ENCODE measurements at regions of chr22 and their contacts with region 1.

Region 1: GRCh38 chr22:31561238-31561887 is 65.0 kb downstream of the SFI1 start:
- DNase-seq: peak; percentile 74
- H3K4me3 ChIP-seq: no peak overlapping the region
- H3K27ac ChIP-seq: no peak overlapping the region
- H3K4me1 ChIP-seq: no peaks in the 10 kb centered on the region
- H3K27me3 ChIP-seq: no peaks in the 10 kb centered on the region
- CTCF ChIP-seq: peak; percentile 73

Region 2: GRCh38 chr22:31623592-31624304 is 62.4 kb after region 1 on chr22:
- CTCF ChIA-PET with region 1: no interaction called
- POLR2A ChIA-PET with region 1: interaction called, 10 read pairs
- intact Hi-C with region 1: no loop called
- DNase-seq: no peak
- H3K4me3 ChIP-seq: no peak overlapping the region
- H3K27ac ChIP-seq: no peak overlapping the region
- H3K4me1 ChIP-seq: no peaks in the 10 kb centered on the region
- H3K27me3 ChIP-seq: no peaks in the 10 kb centered on the region
- CTCF ChIP-seq: no peak

Region 3: GRCh38 chr22:31630331-31631329 is 69.3 kb after region 1 on chr22:
- CTCF ChIA-PET with region 1: interaction called, 3 read pairs
- POLR2A ChIA-PET with region 1: no interaction called
- intact Hi-C with region 1: loop called (anchors 2 kb)
- DNase-seq: peak; percentile 86
- H3K4me3 ChIP-seq: peak overlapping the region; percentile 75
- H3K27ac ChIP-seq: peak overlapping the region; percentile 92
- H3K4me1 ChIP-seq: peaks cover 5% of the 10 kb centered on the region
- H3K27me3 ChIP-seq: no peaks in the 10 kb centered on the region
- CTCF ChIP-seq: no peak

Region 4: DNA sequence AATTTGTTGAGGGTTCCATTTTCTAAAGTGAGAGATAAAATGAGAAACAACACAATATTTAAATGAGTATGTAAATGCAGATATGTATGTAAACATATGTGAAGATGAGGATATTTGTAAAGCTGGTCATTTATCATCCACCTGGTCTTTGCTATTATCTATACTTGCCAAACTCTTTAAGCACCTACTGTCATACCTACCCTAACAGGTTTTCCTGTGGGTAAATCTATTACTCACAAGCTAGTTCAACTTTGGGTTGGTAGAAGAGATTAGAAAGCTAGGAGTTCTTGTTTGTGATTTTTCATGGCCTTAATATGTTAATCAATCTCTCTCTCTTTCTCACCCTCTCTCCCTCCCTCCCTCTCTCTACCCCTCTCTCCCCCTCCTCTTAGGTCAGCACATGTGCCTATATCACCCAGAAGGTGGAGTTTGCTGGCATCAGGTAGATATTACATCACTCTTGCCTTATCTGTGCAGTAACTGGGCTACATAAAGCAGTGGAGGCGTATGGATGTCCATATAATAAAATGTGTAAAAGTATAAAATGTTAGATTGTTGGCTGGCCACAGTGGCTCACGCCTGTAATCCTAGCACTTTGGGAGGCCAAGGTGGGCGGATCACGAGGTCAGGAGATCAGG is 207.2 kb after region 1 on chr22:
- CTCF ChIA-PET with region 1: no interaction called
- POLR2A ChIA-PET with region 1: no interaction called
- intact Hi-C with region 1: no loop called
- DNase-seq: no peak
- H3K4me3 ChIP-seq: no peak overlapping the region
- H3K27ac ChIP-seq: no peak overlapping the region
- H3K4me1 ChIP-seq: no peaks in the 10 kb centered on the region
- H3K27me3 ChIP-seq: no peaks in the 10 kb centered on the region
- CTCF ChIP-seq: no peak

Region 5: GRCh38 chr22:31917227-31917921 is 356.0 kb after region 1 on chr22:
- CTCF ChIA-PET with region 1: no interaction called
- POLR2A ChIA-PET with region 1: no interaction called
- intact Hi-C with region 1: no loop called
- DNase-seq: no peak
- H3K4me3 ChIP-seq: no peak overlapping the region
- H3K27ac ChIP-seq: no peak overlapping the region
- H3K4me1 ChIP-seq: no peaks in the 10 kb centered on the region
- H3K27me3 ChIP-seq: no peaks in the 10 kb centered on the region
- CTCF ChIP-seq: no peak

Region 6: GRCh38 chr22:31943976-31944699 is 382.8 kb after region 1 on chr22 and contains the start of gene YWHAH:
- CTCF ChIA-PET with region 1: no interaction called
- POLR2A ChIA-PET with region 1: no interaction called
- intact Hi-C with region 1: no loop called
- DNase-seq: peak; percentile 95
- H3K4me3 ChIP-seq: peak within 1 kb of the TSS; percentile 68
- H3K27ac ChIP-seq: peak within 1 kb of the TSS; percentile 96
- H3K4me1 ChIP-seq: peaks cover 22% of the 10 kb centered on the region
- H3K27me3 ChIP-seq: no peaks in the 10 kb centered on the region
- CTCF ChIP-seq: no peak
- total RNA-seq, gene YWHAH: 161 and 177 TPM in 2 replicates